Activated CD4-positive, alpha-beta T cell treated with anti-CD3 and anti-CD28 coated beads, Interleukin-2, amount 10 ng/mL, durations not matched to agents 24 days and 14 days (primary cell): ENCODE measurements at regions of chr18 and their contacts with region 1.

Region 1: DNA sequence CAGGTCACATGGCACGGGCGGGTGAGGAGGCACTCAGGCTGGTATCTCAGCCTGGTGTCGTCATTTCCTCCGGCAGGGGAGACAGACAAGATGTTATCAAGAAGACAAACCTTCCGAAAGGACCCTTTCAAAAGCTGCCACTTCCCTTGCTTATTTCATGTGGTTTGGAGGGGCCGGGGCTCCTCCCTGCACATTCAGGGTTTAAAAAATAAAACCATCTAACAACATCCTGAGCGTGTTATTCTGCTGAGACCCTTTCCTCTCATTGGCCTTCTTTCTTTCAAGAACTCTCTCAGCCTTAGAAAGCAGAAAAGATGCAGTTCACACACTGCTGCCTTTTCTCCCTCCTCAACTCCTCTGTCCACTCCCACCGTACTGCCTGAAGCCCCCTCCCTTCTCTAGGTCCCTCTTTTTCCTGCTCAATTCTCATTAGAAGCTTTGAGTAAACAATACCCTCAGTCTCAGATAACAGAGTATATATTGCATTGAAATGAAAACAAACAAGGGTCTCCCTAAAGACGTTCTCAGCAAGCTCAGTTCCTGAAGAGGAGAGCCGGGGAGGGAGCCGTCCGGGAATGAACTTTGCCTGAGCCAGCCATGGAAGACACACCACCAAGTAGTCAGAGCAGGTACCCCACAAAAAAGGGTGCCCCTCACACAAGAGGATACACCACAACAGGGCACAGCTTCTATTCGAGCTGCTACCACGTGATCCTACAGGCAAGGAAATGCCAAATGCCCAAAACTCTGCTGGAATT is 9.7 kb downstream of the SMAD7 start:
- DNase-seq: peak; percentile 94
- H3K4me3 Mint-ChIP-seq: peak overlapping the region; percentile 82
- H3K27ac Mint-ChIP-seq: peak overlapping the region; percentile 91
- H3K4me1 Mint-ChIP-seq: peaks cover 88% of the 10 kb centered on the region
- H3K27me3 Mint-ChIP-seq: no peaks in the 10 kb centered on the region

Region 2: DNA sequence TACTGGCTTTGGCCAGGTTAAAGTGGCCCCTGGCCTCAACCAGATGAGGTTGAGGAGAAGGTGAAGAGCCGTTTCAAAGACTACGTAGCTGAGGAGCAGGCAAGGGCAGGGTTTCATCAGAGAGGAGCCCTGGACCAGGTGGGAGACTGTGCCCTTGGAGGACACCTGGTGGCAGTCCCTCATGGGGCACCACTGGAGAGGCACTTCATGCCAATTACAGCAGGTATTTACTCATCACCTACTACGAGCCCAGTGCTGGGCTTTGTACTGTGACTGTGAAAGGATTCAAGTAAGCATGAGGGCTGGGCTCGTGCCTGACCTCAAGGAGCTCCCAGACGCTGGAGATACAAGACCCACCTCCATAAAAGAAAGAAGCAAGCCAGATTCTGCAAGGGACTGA is 27.8 kb before region 1 on chr18:
- intact Hi-C with region 1: loop called (anchors 1 kb)
- DNase-seq: peak; percentile 76
- H3K4me3 Mint-ChIP-seq: no peak overlapping the region
- H3K27ac Mint-ChIP-seq: no peak overlapping the region
- H3K4me1 Mint-ChIP-seq: peaks cover 27% of the 10 kb centered on the region
- H3K27me3 Mint-ChIP-seq: no peaks in the 10 kb centered on the region

Region 3: GRCh38 chr18:48928787-48929186 is 12.2 kb before region 1 on chr18:
- intact Hi-C with region 1: loop called (anchors 2 kb)
- DNase-seq: peak; percentile 89
- H3K4me3 Mint-ChIP-seq: peak overlapping the region; percentile 84
- H3K27ac Mint-ChIP-seq: peak overlapping the region; percentile 89
- H3K4me1 Mint-ChIP-seq: peaks cover 89% of the 10 kb centered on the region
- H3K27me3 Mint-ChIP-seq: no peaks in the 10 kb centered on the region

Region 4: DNA sequence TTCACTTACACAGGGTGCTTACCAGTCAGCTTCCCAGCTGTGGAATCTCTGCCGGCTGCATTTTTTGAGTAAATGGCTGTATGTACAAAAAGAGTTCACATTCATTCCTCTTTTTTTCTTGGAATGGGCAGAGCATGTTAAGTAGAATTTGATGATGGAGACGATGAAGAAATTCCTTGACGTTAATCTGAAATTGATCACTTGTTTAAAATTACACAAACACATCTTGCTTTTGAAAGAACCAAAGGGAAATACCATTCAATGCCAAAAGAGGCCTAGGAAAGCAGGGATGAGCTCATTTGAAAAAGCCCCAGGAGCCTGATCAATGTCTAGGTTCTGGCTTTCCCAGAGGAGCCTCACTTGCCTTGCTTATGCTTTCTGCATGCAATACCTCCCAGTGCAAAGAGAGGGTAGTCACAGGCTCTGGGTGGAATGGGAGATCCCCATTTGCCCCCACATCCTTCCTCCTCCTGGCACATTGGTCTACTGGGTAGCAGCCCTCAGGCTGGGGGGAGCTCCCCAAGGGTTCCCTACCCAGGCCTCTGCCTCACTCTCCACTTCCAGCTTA is 22.0 kb after region 1 on chr18:
- intact Hi-C with region 1: no loop called
- DNase-seq: no peak
- H3K4me3 Mint-ChIP-seq: no peak overlapping the region
- H3K27ac Mint-ChIP-seq: no peak overlapping the region
- H3K4me1 Mint-ChIP-seq: peaks cover 2% of the 10 kb centered on the region
- H3K27me3 Mint-ChIP-seq: peaks cover 43% of the 10 kb centered on the region

Region 5: DNA sequence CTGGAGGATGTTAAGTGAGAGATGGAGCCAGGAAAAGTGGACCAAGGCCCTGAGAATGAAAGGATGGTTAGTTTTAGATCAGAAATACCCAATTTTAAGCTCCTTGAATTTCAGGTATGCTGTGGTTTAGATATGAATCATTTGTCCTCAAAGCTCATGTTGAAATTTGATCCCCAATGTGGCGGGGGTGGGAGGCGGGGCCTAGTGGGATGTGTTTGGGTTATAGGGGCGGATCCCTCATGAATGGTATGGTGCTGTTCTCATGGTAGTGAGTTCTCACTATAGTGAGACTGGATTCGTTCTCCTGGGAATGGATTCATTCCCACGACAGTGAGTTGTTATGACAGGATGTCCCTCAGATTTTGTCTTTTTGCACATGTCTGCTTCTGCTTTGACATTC is 1242.5 kb after region 1 on chr18:
- intact Hi-C with region 1: no loop called
- DNase-seq: no peak
- H3K4me3 Mint-ChIP-seq: no peak overlapping the region
- H3K27ac Mint-ChIP-seq: no peak overlapping the region
- H3K4me1 Mint-ChIP-seq: peaks cover 2% of the 10 kb centered on the region
- H3K27me3 Mint-ChIP-seq: peaks cover 16% of the 10 kb centered on the region